ENCODE measurements at regions of chr3 and their contacts with region 1.

Region 1: GRCh38 chr3:150238998-150239619 is 169.0 kb upstream of the TSC22D2 start:
- DNase-seq: peak; percentile 41 to 68
- ATAC-seq: peak; percentile 77 to 94; a peak in 3 of 6 replicates
- H3K4me3 ChIP-seq: no peak overlapping the region
- H3K27ac ChIP-seq: no peak overlapping the region
- H3K4me1 ChIP-seq: peaks cover 6% of the 10 kb centered on the region; the same call in 1 of the 3 replicates
- CTCF ChIP-seq: peak; percentile 83
- EP300 ChIP-seq: no peak
- POLR2A ChIP-seq: no peak
- RAD21 ChIP-seq: peak; percentile 88 to 93

Region 2: DNA sequence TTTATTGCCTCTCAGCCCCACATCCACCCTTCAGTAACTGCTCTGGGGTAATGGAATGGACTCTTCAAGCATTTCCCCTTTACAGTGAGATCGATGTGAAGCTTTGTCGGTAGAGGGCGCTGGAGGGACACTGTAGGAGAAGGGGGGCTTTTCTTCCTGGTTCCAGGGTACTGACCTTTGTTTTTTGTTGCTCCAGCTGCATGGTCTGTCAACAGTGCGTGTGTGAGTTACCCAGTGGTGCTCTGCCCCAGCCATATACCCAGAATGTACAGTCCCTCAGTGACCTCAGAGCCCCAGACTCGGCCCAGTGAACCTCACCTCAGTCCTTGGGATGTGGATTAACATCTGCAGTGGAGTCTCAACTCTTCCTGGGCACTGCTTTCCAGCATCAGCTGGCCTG is 11.3 kb before region 1 on chr3:
- CTCF ChIA-PET with region 1: interaction called, 13 read pairs
- POLR2A ChIA-PET with region 1: no interaction called
- DNase-seq: peak; percentile 38 to 47
- ATAC-seq: peak; percentile 74 to 88; a peak in 4 of 6 replicates
- H3K4me3 ChIP-seq: no peak overlapping the region
- H3K27ac ChIP-seq: no peak overlapping the region
- H3K4me1 ChIP-seq: no peaks in the 10 kb centered on the region
- CTCF ChIP-seq: peak; percentile 53
- EP300 ChIP-seq: no peak
- POLR2A ChIP-seq: no peak
- RAD21 ChIP-seq: peak; percentile 67 to 84

Region 3: DNA sequence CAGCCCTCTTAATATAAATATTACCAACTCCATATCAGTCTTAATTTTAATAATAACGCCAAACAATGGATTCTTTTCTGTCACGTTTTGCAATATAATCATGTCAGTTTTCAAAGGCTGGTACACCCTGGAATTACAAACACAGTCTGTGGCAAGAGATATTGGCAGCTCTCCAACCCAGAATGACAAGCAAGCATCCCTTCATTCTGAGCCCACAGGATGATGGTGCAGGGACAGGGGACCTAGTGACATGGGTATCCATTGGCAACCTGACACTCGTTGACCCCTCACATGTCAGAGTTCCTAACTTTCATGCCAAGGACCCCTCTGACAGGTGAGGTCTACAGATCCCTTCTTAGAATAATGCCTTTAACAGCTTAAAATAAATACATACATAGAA is 14.5 kb after region 1 on chr3:
- CTCF ChIA-PET with region 1: interaction called, 27 read pairs
- POLR2A ChIA-PET with region 1: no interaction called
- DNase-seq: no peak
- ATAC-seq: no peak
- H3K4me3 ChIP-seq: no peak overlapping the region
- H3K27ac ChIP-seq: no peak overlapping the region
- H3K4me1 ChIP-seq: 0 out of 3 replicates have a peak, but pooled peaks cover 3% of the 10 kb centered on the region
- CTCF ChIP-seq: no peak
- EP300 ChIP-seq: no peak
- POLR2A ChIP-seq: no peak
- RAD21 ChIP-seq: no peak

Region 4: GRCh38 chr3:150268426-150269391 is 29.6 kb after region 1 on chr3:
- CTCF ChIA-PET with region 1: interaction called, 18 read pairs
- POLR2A ChIA-PET with region 1: no interaction called
- DNase-seq: peak; percentile 8 to 48
- ATAC-seq: peak; percentile 77 to 87; a peak in 5 of 6 replicates
- H3K4me3 ChIP-seq: no peak overlapping the region
- H3K27ac ChIP-seq: peak overlapping the region in 1 of 2 experiments; percentile 11; a peak in 1 of 6 replicates
- H3K4me1 ChIP-seq: peaks cover 15% of the 10 kb centered on the region
- CTCF ChIP-seq: no peak
- EP300 ChIP-seq: no peak
- POLR2A ChIP-seq: no peak
- RAD21 ChIP-seq: no peak

Region 5: DNA sequence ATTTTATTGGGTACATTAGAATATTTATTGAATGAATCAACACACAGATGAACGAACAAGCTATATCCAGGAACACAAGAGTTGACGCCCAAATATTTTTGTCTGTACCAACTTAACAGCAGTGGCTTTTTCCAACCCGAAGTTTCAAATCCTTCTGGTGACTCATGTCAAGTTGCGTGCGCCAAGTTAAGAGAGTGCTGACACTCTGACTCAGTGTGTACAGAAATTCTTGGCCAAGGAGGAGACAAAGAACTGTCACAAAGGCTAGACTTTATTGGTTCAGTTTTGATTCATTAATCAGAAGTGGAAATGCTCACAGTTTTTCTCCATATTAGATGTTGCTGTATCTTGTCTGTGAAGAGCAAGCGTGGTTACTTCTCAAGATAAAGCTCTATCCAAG is 109.4 kb after region 1 on chr3:
- CTCF ChIA-PET with region 1: interaction called, 18 read pairs
- POLR2A ChIA-PET with region 1: no interaction called
- DNase-seq: peak; percentile 81 to 85
- ATAC-seq: peak; percentile 81 to 84
- H3K4me3 ChIP-seq: no peak overlapping the region
- H3K27ac ChIP-seq: peak overlapping the region; percentile 72 to 82
- H3K4me1 ChIP-seq: peaks cover 69% of the 10 kb centered on the region
- CTCF ChIP-seq: no peak
- EP300 ChIP-seq: peak; percentile 55 to 74; a peak in 2 of 5 replicates
- POLR2A ChIP-seq: no peak
- RAD21 ChIP-seq: peak in 1 of 2 experiments; percentile 35; a peak in 3 of 5 replicates

Region 6: GRCh38 chr3:150402217-150402616 is 163.1 kb after region 1 on chr3:
- CTCF ChIA-PET with region 1: interaction called, 75 read pairs
- POLR2A ChIA-PET with region 1: no interaction called
- DNase-seq: no peak
- ATAC-seq: no peak
- H3K4me3 ChIP-seq: no peak overlapping the region
- H3K27ac ChIP-seq: no peak overlapping the region
- H3K4me1 ChIP-seq: peaks cover 12% of the 10 kb centered on the region; the same call in 2 of the 3 replicates
- CTCF ChIP-seq: no peak
- EP300 ChIP-seq: no peak
- POLR2A ChIP-seq: no peak
- RAD21 ChIP-seq: no peak